Activated CD8-positive, alpha-beta memory T cell treated with anti-CD3 and anti-CD28 coated beads, Interleukin-2, amount 10 ng/mL, durations not matched to agents 7 days and 5 days (primary cell): ENCODE measurements at regions of chr11 and their contacts with region 1.

Region 1: DNA sequence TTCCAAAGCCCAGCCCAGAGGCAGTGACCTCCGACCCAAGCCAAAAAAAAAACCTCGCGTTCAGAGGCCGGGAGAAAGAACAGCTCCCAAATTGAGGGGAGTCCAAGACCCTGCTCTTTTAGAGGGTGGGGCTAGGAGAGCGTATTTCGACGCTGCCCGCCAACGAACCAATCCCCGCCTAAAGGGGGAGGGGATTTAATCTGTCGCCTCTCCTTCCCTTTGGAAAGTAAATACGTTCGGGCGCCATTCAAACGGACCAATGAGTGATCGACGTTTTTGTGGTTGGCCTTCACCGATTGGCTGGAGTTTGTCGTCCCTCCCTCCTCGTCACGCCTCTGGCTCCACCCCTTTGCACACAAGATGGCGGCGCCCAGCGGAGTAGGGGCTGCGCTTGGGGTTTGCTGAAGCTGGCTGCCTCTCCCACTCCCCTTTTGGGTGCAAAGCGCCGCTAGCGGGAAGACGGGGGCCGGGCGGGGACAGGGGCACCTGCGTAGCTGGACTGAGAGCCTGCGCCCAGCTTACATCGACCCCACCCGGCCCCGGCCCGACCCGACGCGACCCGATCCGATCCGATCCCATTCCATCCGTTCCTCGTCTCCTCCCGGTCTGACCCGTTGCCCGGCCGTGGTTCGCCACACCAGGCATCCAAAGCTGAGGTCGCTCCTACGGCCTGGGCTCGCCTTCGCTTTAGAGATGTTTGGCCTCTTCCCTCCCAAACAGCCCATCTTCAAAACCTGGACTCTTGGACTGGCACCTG is at the start of gene RNF26:
- DNase-seq: peak; percentile 98
- ATAC-seq: peak; percentile 95
- H3K4me3 Mint-ChIP-seq: peak within 1 kb of the TSS; percentile 93
- H3K27ac Mint-ChIP-seq: peak within 1 kb of the TSS; percentile 96
- H3K4me1 Mint-ChIP-seq: peaks cover 48% of the 10 kb centered on the region
- H3K27me3 Mint-ChIP-seq: peaks cover 20% of the 10 kb centered on the region
- total RNA-seq, gene RNF26: 38.7 to 42.1 TPM

Region 2: GRCh38 chr11:119168471-119169281 is 165.7 kb before region 1 on chr11 and contains the start of gene NLRX1:
- CTCF ChIA-PET with region 1: interaction called, 12 read pairs
- DNase-seq: peak; percentile 91
- ATAC-seq: peak; percentile 95
- H3K4me3 Mint-ChIP-seq: peak within 1 kb of the TSS; percentile 85
- H3K27ac Mint-ChIP-seq: peak within 1 kb of the TSS; percentile 91
- H3K4me1 Mint-ChIP-seq: peaks cover 20% of the 10 kb centered on the region
- H3K27me3 Mint-ChIP-seq: no peaks in the 10 kb centered on the region
- total RNA-seq, gene NLRX1: 21.2 to 22.2 TPM

Region 3: GRCh38 chr11:119323538-119324033 is 10.8 kb before region 1 on chr11:
- CTCF ChIA-PET with region 1: interaction called, 90 read pairs
- DNase-seq: peak; percentile 87
- ATAC-seq: no peak
- H3K4me3 Mint-ChIP-seq: no peak overlapping the region
- H3K27ac Mint-ChIP-seq: no peak overlapping the region
- H3K4me1 Mint-ChIP-seq: peaks cover 28% of the 10 kb centered on the region
- H3K27me3 Mint-ChIP-seq: peaks cover 8% of the 10 kb centered on the region

Region 4: GRCh38 chr11:119373921-119374631 is 39.7 kb after region 1 on chr11:
- CTCF ChIA-PET with region 1: interaction called, 54 read pairs
- DNase-seq: no peak
- ATAC-seq: peak; percentile 66
- H3K4me3 Mint-ChIP-seq: no peak overlapping the region
- H3K27ac Mint-ChIP-seq: peak overlapping the region; percentile 62
- H3K4me1 Mint-ChIP-seq: peaks cover 27% of the 10 kb centered on the region
- H3K27me3 Mint-ChIP-seq: peaks cover 4% of the 10 kb centered on the region

Region 5: GRCh38 chr11:119460582-119460981 is 126.2 kb after region 1 on chr11:
- CTCF ChIA-PET with region 1: no interaction called
- DNase-seq: no peak
- ATAC-seq: no peak
- H3K4me3 Mint-ChIP-seq: no peak overlapping the region
- H3K27ac Mint-ChIP-seq: no peak overlapping the region
- H3K4me1 Mint-ChIP-seq: no peaks in the 10 kb centered on the region
- H3K27me3 Mint-ChIP-seq: peaks cover 49% of the 10 kb centered on the region